B cell (primary cell): ENCODE measurements at regions of chr1 and their contacts with region 1.

Region 1: DNA sequence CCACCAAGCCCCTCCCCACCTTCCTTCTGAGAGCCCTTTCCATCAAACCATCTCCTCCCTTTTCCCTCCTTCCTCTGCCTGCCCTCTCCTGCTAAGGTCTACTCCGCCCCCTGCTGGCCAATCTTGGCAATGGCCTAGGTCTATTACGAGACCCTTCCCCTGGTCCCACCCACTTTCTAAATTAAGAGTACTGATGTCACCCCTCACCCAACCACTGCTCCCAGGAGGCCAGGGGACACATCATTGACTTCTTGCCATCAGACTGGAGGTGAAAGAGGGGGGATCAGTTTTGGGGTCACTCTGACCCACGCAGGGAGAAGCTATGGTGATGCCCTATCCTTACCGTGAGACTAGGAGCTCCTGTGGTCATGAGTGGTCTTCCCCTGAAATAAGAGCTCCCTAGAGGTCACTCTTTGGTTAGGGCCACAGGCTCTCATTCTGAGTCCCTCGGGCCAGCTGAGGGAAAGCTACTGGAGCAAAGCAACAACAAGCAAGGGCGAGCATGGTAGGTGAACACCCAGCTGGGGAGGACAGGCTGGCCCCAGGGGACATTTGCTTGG is 34.6 kb upstream of the S100A7 start:
- DNase-seq: peak; percentile 80
- ATAC-seq: peak; percentile 83
- H3K4me3 ChIP-seq: no peak overlapping the region
- H3K4me3 Mint-ChIP-seq: peak overlapping the region; percentile 41
- H3K27ac ChIP-seq: no peak overlapping the region
- H3K27ac Mint-ChIP-seq: peak overlapping the region; percentile 5
- H3K4me1 ChIP-seq: peaks cover 8% of the 10 kb centered on the region in 2 donors
- H3K4me1 Mint-ChIP-seq: peaks cover 10% of the 10 kb centered on the region
- H3K27me3 ChIP-seq: peaks cover 0 to 17% (median 6%) of the 10 kb centered on the region in 4 experiments
- H3K27me3 Mint-ChIP-seq: peaks cover 40% of the 10 kb centered on the region
- CTCF ChIP-seq: peak; percentile 88

Region 2: DNA sequence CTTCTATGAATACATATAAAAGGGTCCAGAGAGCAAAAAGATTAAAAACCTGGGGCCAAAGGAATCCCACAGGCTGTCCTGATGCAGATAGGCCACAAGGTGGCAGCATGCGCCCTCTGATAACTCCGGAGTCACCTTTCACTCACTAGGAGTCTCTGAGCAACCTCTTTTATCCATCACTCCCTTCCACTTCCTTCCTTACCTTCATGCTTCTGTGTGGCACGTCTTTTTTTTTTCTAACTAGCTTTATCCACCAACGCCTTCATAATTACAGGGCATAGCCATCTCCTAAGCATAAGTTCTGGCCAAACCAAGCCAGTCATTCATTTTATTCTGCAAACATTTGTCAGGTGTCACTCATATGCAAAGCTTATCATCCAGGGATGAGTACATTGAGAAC is 142.5 kb before region 1 on chr1:
- CTCF ChIA-PET with region 1: interaction called, 59 read pairs
- POLR2A ChIA-PET with region 1: no interaction called
- intact Hi-C with region 1: loop called (anchors 1 kb)
- DNase-seq: peak; percentile 69
- ATAC-seq: peak; percentile 58
- H3K4me3 ChIP-seq: no peak overlapping the region
- H3K4me3 Mint-ChIP-seq: no peak overlapping the region
- H3K27ac ChIP-seq: no peak overlapping the region
- H3K27ac Mint-ChIP-seq: no peak overlapping the region
- H3K4me1 ChIP-seq: peaks cover 3 to 5% of the 10 kb centered on the region in 2 donors
- H3K4me1 Mint-ChIP-seq: peaks cover 12% of the 10 kb centered on the region
- H3K27me3 ChIP-seq: peaks cover 0 to 27% (median 15%) of the 10 kb centered on the region in 4 experiments
- H3K27me3 Mint-ChIP-seq: peaks cover 53% of the 10 kb centered on the region
- CTCF ChIP-seq: peak; percentile 95

Region 3: DNA sequence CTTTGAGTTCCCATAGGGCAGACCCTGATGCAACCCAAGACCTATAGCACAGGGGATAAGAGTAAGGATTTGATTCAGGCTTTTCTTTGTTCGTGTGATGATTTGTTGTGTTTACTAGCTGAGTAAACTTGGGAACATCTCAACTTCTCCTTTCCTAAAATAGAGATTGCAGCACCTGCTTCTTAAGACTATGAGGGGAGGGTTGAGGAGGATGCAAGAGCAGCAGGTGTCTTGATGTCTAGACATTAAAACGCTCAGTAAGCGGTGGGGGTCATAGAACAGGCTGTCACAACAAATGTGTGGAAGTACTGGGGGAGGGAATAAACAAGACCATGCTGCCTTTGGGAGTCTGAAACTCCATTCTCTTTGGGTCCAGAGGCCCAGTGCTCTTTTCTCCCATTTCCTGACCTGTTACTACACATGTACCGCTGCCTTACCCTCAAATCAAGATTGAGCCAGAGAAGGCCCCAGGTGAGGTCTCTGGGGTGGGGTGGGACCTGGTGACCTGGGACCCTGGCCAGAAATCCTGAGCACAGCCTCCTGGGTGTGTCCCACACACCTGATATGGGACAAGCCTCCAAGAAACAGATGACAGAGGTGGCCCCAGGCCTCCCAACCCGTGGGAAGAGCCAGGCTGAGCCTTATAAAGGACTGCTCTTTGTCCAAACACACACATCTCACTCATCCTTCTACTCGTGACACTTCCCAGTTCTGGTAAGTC is 79.0 kb before region 1 on chr1 and contains the start of gene S100A7A:
- CTCF ChIA-PET with region 1: no interaction called
- POLR2A ChIA-PET with region 1: no interaction called
- intact Hi-C with region 1: no loop called
- DNase-seq: no peak
- ATAC-seq: no peak
- H3K4me3 ChIP-seq: no peak within 1 kb of the TSS
- H3K4me3 Mint-ChIP-seq: no peak within 1 kb of the TSS
- H3K27ac ChIP-seq: no peak within 1 kb of the TSS
- H3K27ac Mint-ChIP-seq: no peak within 1 kb of the TSS
- H3K4me1 ChIP-seq: no peaks in the 10 kb centered on the region
- H3K4me1 Mint-ChIP-seq: no peaks in the 10 kb centered on the region
- H3K27me3 ChIP-seq: peaks cover 0 to 13% (median 2%) of the 10 kb centered on the region in 4 experiments
- H3K27me3 Mint-ChIP-seq: peaks cover 21% of the 10 kb centered on the region
- CTCF ChIP-seq: no peak
- total RNA-seq, gene S100A7A: not detected in 2 replicates

Region 4: DNA sequence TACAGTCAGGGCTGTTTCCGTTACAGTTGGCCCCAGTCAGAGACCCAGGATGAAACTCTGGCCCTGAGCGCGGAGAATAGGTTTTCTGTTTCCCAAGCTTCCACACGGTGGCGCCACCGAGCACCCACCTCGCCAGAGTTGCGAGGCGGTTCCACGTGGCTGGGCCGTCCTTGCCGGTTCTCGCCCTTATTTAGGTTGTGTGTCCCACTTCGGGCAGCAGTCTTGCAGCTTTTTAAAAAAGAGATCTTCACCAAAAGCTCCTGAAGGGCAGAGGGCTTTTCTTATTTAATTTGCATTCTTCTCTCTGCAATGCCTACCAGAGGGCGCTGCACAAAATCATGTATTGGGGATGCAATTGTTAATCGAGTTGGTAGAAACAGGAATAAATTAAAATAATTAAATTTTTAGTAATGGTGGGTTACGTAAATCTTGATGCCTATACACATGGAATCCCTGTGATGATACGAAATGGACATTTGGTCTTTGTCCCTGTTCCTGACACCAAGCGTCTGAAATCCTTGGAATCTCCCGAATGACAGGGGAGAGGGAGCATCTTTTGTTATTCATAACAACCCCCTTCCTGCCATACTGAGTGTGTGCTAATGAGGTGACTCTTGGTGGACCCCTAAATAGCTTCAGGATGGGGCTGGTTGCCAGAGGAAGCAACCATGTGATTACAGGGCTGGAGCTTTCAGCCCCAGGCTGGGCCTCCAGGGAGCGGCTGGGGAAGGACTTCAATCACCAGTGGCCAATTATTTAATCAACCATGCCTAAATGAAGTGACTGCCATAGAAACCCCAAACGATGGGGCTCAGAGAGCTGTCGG is 29.0 kb before region 1 on chr1:
- CTCF ChIA-PET with region 1: interaction called, 3 read pairs
- POLR2A ChIA-PET with region 1: no interaction called
- intact Hi-C with region 1: loop called (anchors 1 kb)
- DNase-seq: peak; percentile 63
- ATAC-seq: peak; percentile 43
- H3K4me3 ChIP-seq: no peak overlapping the region
- H3K4me3 Mint-ChIP-seq: no peak overlapping the region
- H3K27ac ChIP-seq: no peak overlapping the region
- H3K27ac Mint-ChIP-seq: no peak overlapping the region
- H3K4me1 ChIP-seq: peaks cover 0 to 5% of the 10 kb centered on the region in 2 donors
- H3K4me1 Mint-ChIP-seq: peaks cover 2% of the 10 kb centered on the region
- H3K27me3 ChIP-seq: peaks cover 0 to 21% (median 7%) of the 10 kb centered on the region in 4 experiments
- H3K27me3 Mint-ChIP-seq: peaks cover 59% of the 10 kb centered on the region
- CTCF ChIP-seq: peak; percentile 78

Region 5: DNA sequence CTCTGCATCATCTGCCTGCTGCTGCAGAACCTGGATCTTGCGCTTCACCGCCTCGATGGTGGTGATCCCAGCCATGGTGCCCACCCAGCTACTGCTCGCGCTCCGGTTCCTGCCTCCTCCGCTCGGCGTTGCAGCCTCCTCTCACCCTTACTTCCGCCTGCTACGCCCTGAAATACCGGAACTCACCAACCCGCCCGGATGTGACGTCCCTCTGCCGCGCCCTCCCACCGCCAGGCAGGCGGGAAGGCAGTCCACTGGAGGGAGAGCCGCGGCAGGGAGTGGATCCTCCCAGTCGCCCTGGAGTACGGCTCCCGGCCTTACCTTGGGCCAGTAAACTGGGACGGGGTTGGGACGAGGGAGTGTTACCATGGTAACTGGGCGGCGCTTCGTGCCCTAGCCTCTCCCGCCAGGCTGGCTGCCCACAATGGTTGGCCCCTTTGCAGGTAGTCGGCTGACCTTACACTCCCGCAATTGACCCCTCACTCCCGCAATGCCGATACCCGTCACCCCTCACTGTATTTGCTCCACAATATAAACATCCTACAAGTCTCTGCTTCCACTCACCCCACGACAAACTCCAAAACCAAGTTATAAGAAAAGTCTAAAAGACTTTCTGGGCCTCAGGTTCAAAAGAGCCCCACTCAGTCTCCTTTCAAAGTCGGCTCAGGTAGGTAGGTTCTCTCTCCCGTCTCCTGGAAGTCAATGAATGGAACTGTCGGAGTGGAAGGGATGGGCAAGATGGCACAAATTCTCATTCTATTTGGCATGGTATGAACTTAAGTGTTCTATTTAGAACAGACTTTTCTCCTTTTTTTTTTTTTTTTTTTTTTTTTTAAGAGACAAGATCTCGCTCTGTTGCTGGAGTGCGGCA is 688.2 kb after region 1 on chr1:
- CTCF ChIA-PET with region 1: no interaction called
- POLR2A ChIA-PET with region 1: no interaction called
- intact Hi-C with region 1: no loop called
- DNase-seq: peak; percentile 94
- ATAC-seq: peak; percentile 73
- H3K4me3 ChIP-seq: peak overlapping the region; percentile 54 to 99 (median 98)
- H3K4me3 Mint-ChIP-seq: peak overlapping the region; percentile 91
- H3K27ac ChIP-seq: peak overlapping the region; percentile 91 to 96
- H3K27ac Mint-ChIP-seq: peak overlapping the region; percentile 98
- H3K4me1 ChIP-seq: peaks cover 39 to 46% of the 10 kb centered on the region in 2 donors
- H3K4me1 Mint-ChIP-seq: peaks cover 48% of the 10 kb centered on the region
- H3K27me3 ChIP-seq: no peaks in the 10 kb centered on the region
- H3K27me3 Mint-ChIP-seq: peaks cover 4% of the 10 kb centered on the region
- CTCF ChIP-seq: no peak

Region 6: DNA sequence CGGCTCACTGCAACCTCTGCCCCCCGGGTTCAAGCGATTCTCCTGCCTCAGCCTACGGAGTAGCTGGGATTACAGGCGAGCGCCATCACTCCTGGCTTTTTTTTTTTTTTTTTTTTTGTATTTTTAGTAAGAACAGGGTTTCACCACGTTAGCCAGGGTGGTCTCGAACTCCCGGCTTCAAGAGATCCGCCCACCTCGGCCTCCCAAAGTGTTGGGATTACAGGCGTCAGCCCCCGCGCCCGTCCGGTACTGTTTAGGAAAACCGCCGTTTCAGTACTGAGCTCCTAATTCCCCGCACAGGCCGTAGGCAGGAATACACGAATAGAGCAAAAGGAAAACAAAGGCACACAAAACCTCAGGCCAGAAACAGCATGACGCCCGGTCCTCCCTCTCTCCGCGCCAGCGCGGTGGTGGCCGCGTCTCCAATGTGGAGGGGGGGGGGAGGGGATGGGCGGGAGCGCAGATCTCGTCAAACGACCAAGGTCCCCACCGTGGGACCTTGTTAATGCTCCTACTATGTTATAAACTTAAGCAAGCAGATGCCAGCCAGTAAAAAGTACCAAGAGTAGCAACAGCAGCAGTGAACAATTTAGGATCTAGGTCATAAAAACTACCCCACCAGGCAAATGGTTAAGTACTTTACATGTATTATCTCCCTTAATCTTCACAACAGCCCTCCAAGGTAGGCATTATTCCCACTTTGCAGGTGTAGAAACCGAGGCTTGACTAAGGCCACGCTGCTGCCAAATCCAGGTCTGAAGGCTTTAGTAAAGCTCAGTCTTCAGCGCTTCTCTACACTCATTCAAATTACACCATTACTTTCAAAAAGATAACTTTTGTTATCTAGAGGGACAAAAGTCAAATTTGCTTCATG is 1113.6 kb after region 1 on chr1:
- CTCF ChIA-PET with region 1: no interaction called
- POLR2A ChIA-PET with region 1: no interaction called
- intact Hi-C with region 1: no loop called
- DNase-seq: peak; percentile 66
- ATAC-seq: peak; percentile 15
- H3K4me3 ChIP-seq: peak overlapping the region; percentile 83 to 96 (median 93)
- H3K4me3 Mint-ChIP-seq: peak overlapping the region; percentile 98
- H3K27ac ChIP-seq: peak overlapping the region; percentile 86 to 97
- H3K27ac Mint-ChIP-seq: peak overlapping the region; percentile 96
- H3K4me1 ChIP-seq: peaks cover 47 to 56% of the 10 kb centered on the region in 2 donors
- H3K4me1 Mint-ChIP-seq: peaks cover 55% of the 10 kb centered on the region
- H3K27me3 ChIP-seq: no peaks in the 10 kb centered on the region
- H3K27me3 Mint-ChIP-seq: no peaks in the 10 kb centered on the region
- CTCF ChIP-seq: no peak